Activated T-helper 2 cell treated with anti-CD3 and anti-CD28 coated beads, Interferon-gamma antibody, Interleukin-2, Interleukin-4, amounts not matched to agents 10 μg/mL and 5 μg/mL and 100 μg/mL, durations not matched to agents 14 hours and 24 hours and 36 hours (primary cell): ENCODE measurements at regions of chr19 and their contacts with region 1.

Region 1: DNA sequence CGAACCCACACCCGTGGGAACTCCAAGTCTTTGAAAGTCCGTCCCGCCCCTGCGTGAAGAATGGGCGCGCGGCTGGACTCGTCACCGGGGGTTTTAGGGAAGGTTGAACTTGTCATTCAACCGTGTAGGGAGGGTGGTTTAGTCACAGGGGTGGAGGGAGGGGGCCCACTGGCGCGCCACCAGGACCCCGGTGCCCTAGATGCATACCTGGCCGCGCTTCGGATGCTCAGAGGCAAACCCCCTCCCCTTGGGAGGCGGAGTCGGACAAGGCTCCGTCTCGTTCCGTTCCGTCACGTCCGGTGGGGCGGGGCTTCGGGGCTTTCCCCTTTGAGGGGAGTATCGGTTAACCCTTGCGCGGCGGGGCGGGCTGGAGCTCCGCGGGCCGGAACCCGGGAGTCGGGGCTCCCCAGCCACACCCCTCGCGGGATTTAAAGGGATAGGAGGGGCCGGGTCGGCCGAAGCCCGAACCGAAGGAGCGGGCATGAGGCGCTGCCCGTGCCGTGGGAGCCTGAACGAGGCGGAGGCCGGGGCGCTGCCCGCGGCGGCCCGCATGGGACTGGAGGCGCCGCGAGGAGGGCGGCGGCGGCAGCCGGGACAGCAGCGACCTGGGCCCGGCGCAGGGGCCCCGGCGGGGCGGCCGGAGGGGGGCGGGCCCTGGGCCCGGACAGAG is at the starts of genes COQ8B and ITPKC:
- DNase-seq: peak; percentile 98
- H3K4me3 Mint-ChIP-seq: peak within 1 kb of the TSS; percentile 94
- H3K27ac Mint-ChIP-seq: peak within 1 kb of the TSS; percentile 92
- H3K4me1 Mint-ChIP-seq: peaks cover 48% of the 10 kb centered on the region
- H3K27me3 Mint-ChIP-seq: no peaks in the 10 kb centered on the region
- total RNA-seq, gene COQ8B: 33.5 and 36.7 TPM in 2 replicates
- total RNA-seq, gene ITPKC: 7.4 and 8.4 TPM in 2 replicates

Region 2: DNA sequence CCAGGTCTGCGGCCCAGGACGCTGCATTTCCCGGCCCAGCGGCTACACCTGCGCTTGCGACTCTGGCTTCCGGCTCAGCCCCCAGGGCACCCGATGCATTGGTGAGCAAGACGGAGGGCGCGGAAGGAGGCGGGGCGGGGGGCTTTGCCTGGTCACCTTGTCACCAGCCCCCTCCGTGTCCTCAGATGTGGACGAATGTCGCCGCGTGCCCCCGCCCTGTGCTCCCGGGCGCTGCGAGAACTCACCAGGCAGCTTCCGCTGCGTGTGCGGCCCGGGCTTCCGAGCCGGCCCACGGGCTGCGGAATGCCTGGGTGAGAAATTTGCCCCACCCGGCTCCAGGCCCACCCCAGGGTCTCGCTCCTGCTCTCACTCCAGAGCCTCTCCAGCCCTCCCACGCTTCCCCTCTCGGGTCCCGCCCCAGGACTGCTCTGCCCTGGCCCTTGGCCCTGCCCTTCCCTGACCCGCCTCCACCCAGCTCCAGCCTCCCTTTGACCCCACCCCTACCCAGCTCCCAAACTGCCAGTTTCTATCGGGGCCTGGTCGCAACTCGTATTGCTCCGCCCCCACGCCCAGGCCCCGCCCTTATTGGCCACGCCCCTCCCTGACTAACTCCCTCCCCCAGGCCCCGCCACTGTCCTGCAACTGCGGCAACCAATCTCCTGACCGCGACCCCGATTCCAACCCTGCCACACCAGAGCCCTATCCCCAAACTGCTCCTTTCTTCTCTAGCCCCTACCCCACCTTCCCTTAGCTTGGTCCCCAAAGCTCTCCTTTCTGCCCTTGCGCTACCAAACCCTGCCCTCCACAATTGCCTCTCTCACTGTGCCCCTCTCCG is 107.0 kb before region 1 on chr19:
- intact Hi-C with region 1: loop called (anchors 2 kb)
- DNase-seq: peak; percentile 87
- H3K4me3 Mint-ChIP-seq: peak overlapping the region; percentile 80
- H3K27ac Mint-ChIP-seq: peak overlapping the region; percentile 93
- H3K4me1 Mint-ChIP-seq: peaks cover 35% of the 10 kb centered on the region
- H3K27me3 Mint-ChIP-seq: no peaks in the 10 kb centered on the region

Region 3: GRCh38 chr19:40650749-40651305 is 66.0 kb before region 1 on chr19:
- intact Hi-C with region 1: no loop called
- DNase-seq: no peak
- H3K4me3 Mint-ChIP-seq: no peak overlapping the region
- H3K27ac Mint-ChIP-seq: no peak overlapping the region
- H3K4me1 Mint-ChIP-seq: no peaks in the 10 kb centered on the region
- H3K27me3 Mint-ChIP-seq: no peaks in the 10 kb centered on the region

Region 4: DNA sequence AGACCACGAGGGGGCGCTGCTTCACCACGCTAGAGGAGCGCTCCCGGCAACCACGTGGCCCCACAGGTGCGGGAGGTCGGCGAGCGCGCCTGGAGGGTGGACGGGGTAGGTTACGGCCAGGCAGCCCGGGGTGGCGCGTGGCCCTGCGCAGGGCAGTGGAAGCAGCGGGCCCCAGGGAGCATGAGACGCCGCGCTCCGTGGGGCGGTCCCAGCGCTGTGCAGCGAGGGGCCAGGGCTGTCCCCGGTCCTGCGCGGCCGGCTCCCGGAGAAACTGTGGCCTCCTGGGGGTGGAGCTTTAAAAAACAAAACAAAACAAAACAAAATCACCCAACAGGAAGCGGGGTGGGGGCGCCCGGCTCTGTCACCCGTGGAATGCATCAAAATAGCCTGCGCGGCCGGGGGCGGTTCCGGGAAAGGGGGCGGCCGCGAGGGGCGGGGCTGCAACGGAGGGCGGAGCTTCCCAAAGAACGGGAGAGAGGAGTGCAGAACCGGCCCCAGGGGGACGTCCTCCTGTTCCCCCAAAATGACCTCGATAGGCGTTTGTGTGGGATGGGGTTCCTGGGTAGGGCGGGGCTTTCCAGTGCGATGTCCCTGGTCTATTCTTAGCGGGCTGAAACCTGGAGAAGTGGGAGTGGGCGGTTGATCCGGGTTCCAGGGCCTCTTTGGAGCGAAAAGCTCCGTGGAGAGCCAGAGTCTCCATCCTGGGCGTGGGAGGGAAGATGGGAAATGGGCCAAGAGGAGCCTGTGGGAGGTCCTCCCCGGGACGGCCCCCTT is 53.7 kb before region 1 on chr19:
- intact Hi-C with region 1: loop called (anchors 1 kb)
- DNase-seq: peak; percentile 85
- H3K4me3 Mint-ChIP-seq: peak overlapping the region; percentile 83
- H3K27ac Mint-ChIP-seq: peak overlapping the region; percentile 80
- H3K4me1 Mint-ChIP-seq: peaks cover 17% of the 10 kb centered on the region
- H3K27me3 Mint-ChIP-seq: no peaks in the 10 kb centered on the region

Region 5: DNA sequence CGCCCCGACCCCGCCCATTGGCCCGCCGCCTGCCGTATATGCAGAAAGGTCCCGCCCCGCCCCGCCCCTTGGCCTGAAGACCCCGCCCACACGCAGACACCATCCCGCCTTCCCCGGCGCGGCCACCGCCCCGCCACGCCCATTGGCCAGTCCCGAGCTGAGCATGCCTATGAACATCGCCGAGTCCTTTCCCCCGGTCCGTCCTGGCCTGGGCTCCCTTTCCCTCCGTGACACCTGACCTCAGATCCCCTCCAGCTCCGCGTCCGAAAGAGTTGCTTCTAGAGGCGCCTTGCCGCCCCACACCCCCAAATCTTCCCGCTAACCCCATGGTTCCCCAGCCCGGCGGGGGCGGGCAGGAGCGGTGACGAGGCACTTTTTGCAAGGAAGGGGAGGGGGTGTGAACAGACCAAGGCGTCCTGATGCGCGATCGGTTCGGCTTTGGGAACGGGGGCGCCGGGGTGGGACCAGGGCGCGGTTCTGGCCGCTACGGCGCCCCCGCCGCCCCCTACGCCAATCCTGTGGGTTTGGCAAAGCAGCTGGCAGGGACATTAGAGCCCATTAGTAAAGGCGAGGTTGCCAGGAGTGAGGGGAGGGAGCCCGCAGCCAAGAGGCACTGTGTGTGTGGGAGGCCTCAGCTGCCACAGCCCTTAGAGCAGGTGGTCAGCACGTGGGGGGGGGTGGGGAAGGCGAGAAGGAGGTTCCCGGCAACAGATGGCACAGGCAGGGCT is 25.9 kb before region 1 on chr19:
- intact Hi-C with region 1: loop called (anchors 1 kb)
- DNase-seq: peak; percentile 80
- H3K4me3 Mint-ChIP-seq: peak overlapping the region; percentile 89
- H3K27ac Mint-ChIP-seq: peak overlapping the region; percentile 95
- H3K4me1 Mint-ChIP-seq: peaks cover 1% of the 10 kb centered on the region
- H3K27me3 Mint-ChIP-seq: no peaks in the 10 kb centered on the region

Region 6: DNA sequence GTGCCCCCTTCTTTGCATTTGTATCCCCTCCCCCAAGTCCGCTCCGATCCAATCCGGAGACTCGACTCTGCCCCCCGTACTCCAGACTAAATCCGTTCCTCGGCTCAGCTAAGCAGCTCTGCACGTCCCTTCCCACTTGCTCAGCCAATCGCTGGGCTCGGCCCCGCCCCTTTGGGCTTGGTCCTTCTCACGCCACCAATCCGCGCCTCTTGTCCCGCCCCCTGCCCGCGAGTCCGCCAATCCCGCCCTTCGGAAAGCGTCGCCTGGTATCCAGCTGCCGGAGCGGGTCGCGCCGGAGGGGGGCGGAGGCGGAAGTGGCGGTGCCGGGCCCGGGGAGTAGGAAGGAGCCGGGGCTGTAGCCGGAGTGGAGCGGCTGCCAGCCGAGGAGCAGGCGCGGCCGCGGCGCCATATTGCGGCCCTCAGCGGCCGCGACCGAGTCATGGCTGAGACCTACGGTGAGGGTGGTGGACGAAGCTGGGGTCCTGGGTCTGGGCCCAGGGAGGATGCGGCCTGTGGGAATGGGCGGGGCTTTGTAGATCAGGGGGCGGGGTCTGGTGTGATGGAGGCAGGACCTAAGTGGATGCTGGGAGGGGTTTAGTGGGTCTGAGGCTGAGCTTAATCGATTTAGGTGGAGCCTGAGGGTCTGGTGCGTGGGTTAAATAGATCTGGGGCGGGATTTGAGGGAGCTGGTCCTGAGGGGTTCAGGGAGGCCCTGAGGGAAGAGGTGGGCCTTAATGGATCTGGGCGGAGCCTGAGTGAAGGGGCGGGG is 61.3 kb after region 1 on chr19 and contains the start of gene RAB4B:
- intact Hi-C with region 1: loop called (anchors 1 kb)
- DNase-seq: peak; percentile 100
- H3K4me3 Mint-ChIP-seq: peak within 1 kb of the TSS; percentile 96
- H3K27ac Mint-ChIP-seq: peak within 1 kb of the TSS; percentile 96
- H3K4me1 Mint-ChIP-seq: peaks cover 35% of the 10 kb centered on the region
- H3K27me3 Mint-ChIP-seq: no peaks in the 10 kb centered on the region
- total RNA-seq, gene RAB4B: 50.1 and 50.4 TPM in 2 replicates

Region 7: GRCh38 chr19:40798223-40798996 is 81.6 kb after region 1 on chr19:
- intact Hi-C with region 1: loop called (anchors 2 kb)
- DNase-seq: peak; percentile 100
- H3K4me3 Mint-ChIP-seq: peak overlapping the region; percentile 88
- H3K27ac Mint-ChIP-seq: peak overlapping the region; percentile 94
- H3K4me1 Mint-ChIP-seq: peaks cover 42% of the 10 kb centered on the region
- H3K27me3 Mint-ChIP-seq: no peaks in the 10 kb centered on the region